K562 (cell line): ENCODE measurements at regions of chr5 and their contacts with region 1.

Region 1: DNA sequence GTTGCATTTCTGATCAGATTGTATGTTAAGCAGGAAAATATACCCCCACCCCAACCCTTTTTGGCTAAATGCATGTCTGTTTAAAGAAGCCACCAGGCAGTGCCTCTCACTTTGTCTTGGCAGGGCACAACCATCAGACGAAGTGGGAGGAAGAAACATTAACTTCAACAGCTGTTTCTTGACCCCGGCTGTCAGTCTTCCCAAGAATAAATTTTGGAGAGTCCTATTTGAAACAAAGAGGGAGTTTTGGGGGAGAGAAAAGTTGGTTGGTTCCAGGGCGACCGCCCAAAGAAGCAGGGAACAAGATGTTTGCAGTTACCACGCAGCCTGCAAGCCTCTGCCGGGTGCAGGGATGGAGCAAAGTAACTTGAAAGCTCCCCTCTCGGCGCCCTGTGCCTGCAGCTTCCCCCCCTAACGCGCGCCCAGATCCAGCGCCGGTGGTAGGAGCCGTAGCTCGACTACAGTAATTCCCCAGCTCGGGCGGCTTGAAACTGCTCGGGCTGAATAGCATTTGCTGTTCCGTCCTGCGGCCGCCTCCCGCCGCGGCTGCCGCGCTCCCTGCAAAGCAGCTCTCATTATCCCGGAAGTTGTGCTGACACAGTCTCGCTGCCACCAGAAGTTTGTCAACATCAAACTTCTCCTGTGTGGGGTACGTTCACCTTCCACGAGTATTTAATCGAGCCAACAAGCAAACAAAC is 100.7 kb upstream of the SSBP2 start:
- DNase-seq: peak; percentile 82 to 96 (median 86)
- ATAC-seq: peak; percentile 85
- H3K4me3 ChIP-seq: peak overlapping the region; percentile 34
- H3K27ac ChIP-seq: peak overlapping the region; percentile 81
- H3K4me1 ChIP-seq: peaks cover 32 to 50% of the 10 kb centered on the region in 2 experiments
- H3K27me3 ChIP-seq: no peaks in the 10 kb centered on the region
- CTCF ChIP-seq: no peak
- EP300 ChIP-seq: peak; percentile 97
- POLR2A ChIP-seq: peak; percentile 69
- RAD21 ChIP-seq: peak; percentile 68 to 72

Region 2: GRCh38 chr5:81425569-81425968 is 426.1 kb before region 1 on chr5:
- CTCF ChIA-PET with region 1: no interaction called
- POLR2A ChIA-PET with region 1: no interaction called
- in situ Hi-C with region 1: loop called (anchors 10 kb)
- intact Hi-C with region 1: loop called (anchors 1 kb)
- DNase-seq: peak; percentile 16 to 28 (median 19)
- ATAC-seq: peak; percentile 78
- H3K4me3 ChIP-seq: no peak overlapping the region
- H3K27ac ChIP-seq: no peak overlapping the region
- H3K4me1 ChIP-seq: peaks cover 0 to 3% of the 10 kb centered on the region in 2 experiments; a peak in 3 of 5 replicates
- H3K27me3 ChIP-seq: no peaks in the 10 kb centered on the region
- CTCF ChIP-seq: peak; percentile 46 to 66 (median 47); a peak in 4 of 6 replicates
- EP300 ChIP-seq: no peak
- POLR2A ChIP-seq: no peak
- RAD21 ChIP-seq: peak; percentile 66 to 70

Region 3: GRCh38 chr5:81787474-81788242 is 64.0 kb before region 1 on chr5:
- CTCF ChIA-PET with region 1: no interaction called
- POLR2A ChIA-PET with region 1: interaction called, 3 read pairs
- in situ Hi-C with region 1: no loop called
- intact Hi-C with region 1: loop called (anchors 1 kb)
- DNase-seq: peak in 1 of 4 experiments; percentile 27
- ATAC-seq: peak; percentile 68
- H3K4me3 ChIP-seq: no peak overlapping the region
- H3K27ac ChIP-seq: no peak overlapping the region
- H3K4me1 ChIP-seq: peaks cover 0 to 21% of the 10 kb centered on the region in 2 experiments; a peak in 4 of 5 replicates
- H3K27me3 ChIP-seq: no peaks in the 10 kb centered on the region
- CTCF ChIP-seq: no peak
- EP300 ChIP-seq: peak; percentile 18; the same call in 1 of the 2 replicates
- POLR2A ChIP-seq: no peak
- RAD21 ChIP-seq: no peak

Region 4: DNA sequence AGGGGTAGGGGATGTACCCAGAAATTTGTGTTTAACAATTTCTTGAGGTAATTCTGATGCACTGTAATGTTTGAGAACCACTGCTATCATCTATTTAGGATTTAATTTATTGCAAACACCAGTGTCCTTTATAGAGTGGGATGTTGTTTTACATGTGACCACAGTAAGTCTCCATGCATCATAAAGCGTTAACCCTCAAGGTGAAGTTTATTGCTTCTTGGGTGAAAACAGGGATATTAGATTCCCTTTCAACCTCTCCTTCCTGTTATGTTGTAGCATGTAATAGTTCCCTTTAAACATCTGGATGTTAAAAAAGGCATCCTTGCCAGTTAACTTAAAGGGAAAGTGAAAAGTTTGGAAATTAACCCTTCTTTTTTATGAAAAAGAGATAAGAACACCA is 84.4 kb after region 1 on chr5:
- CTCF ChIA-PET with region 1: no interaction called
- POLR2A ChIA-PET with region 1: no interaction called
- in situ Hi-C with region 1: no loop called
- intact Hi-C with region 1: no loop called
- DNase-seq: no peak
- ATAC-seq: no peak
- H3K4me3 ChIP-seq: no peak overlapping the region
- H3K27ac ChIP-seq: no peak overlapping the region
- H3K4me1 ChIP-seq: peaks cover 0 to 3% of the 10 kb centered on the region in 2 experiments; a peak in 1 of 5 replicates
- H3K27me3 ChIP-seq: no peaks in the 10 kb centered on the region
- CTCF ChIP-seq: no peak
- EP300 ChIP-seq: no peak
- POLR2A ChIP-seq: no peak
- RAD21 ChIP-seq: no peak

Region 5: GRCh38 chr5:81971712-81972495 is 120.3 kb after region 1 on chr5 and contains the start of gene ATG10:
- CTCF ChIA-PET with region 1: no interaction called
- POLR2A ChIA-PET with region 1: interaction called, 6 read pairs
- in situ Hi-C with region 1: no loop called
- intact Hi-C with region 1: loop called (anchors 1 kb)
- DNase-seq: peak; percentile 95 to 96 (median 96)
- ATAC-seq: peak; percentile 97
- H3K4me3 ChIP-seq: peak within 1 kb of the TSS; percentile 63
- H3K27ac ChIP-seq: peak within 1 kb of the TSS; percentile 97
- H3K4me1 ChIP-seq: peaks cover 8 to 10% of the 10 kb centered on the region in 2 experiments; a peak in 4 of 5 replicates
- H3K27me3 ChIP-seq: no peaks in the 10 kb centered on the region
- CTCF ChIP-seq: 0 out of 6 replicates have a peak, but pooled peaks of 1 of the 3 experiments have one; percentile 1
- EP300 ChIP-seq: no peak
- POLR2A ChIP-seq: peak; percentile 94
- RAD21 ChIP-seq: peak; percentile 24 to 33; a peak in 2 of 4 replicates
- polyA plus RNA-seq, gene ATG10: 14.6 to 15.0 TPM

Region 6: DNA sequence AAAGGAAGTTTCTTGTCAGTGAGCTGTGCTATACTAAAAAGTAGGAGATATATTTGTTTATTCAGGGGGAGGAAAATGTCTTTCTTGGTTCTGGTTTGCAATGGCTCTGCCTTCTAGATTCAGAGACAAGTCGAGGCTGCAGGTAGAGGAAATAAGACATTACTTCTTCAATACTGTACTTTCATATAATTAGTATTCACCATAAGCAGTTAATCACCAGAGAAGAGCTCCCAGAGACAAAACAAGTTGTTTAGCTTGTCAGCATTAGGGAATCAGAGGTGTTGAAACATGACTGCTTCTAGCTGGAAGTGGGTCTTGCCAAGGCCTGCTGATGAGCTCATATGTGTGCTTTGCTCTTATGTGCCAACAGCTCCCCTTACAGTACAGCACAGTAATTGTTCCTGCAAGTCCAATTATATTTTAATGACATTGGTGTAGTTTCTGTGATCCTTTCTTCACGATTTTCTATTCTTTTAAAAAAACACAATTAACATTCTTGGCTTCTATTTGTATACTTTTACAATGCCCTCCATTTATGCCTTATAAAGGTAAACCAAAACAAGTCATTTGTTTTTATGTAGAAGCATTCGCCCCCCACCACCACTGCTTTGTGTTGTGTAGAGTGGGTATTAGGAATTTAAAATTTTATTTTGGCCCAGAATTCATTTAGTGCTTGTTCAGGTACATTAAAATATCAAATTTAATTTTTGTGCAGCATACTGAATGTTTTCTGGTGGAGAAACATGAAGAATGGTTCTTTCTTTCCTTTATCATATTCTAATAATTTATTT is 314.3 kb after region 1 on chr5:
- CTCF ChIA-PET with region 1: no interaction called
- POLR2A ChIA-PET with region 1: no interaction called
- in situ Hi-C with region 1: no loop called
- intact Hi-C with region 1: loop called (anchors 1 kb)
- DNase-seq: peak; percentile 19 to 76 (median 45)
- ATAC-seq: peak; percentile 98
- H3K4me3 ChIP-seq: no peak overlapping the region
- H3K27ac ChIP-seq: peak overlapping the region; percentile 25; the same call in 1 of the 3 replicates
- H3K4me1 ChIP-seq: peaks cover 0 to 3% of the 10 kb centered on the region in 2 experiments; a peak in 2 of 5 replicates
- H3K27me3 ChIP-seq: no peaks in the 10 kb centered on the region
- CTCF ChIP-seq: peak; percentile 65 to 92 (median 78)
- EP300 ChIP-seq: no peak
- POLR2A ChIP-seq: no peak
- RAD21 ChIP-seq: peak; percentile 94 to 95